HEK293 (cell line): ENCODE measurements at regions of chr1 and their contacts with region 1.

Region 1: DNA sequence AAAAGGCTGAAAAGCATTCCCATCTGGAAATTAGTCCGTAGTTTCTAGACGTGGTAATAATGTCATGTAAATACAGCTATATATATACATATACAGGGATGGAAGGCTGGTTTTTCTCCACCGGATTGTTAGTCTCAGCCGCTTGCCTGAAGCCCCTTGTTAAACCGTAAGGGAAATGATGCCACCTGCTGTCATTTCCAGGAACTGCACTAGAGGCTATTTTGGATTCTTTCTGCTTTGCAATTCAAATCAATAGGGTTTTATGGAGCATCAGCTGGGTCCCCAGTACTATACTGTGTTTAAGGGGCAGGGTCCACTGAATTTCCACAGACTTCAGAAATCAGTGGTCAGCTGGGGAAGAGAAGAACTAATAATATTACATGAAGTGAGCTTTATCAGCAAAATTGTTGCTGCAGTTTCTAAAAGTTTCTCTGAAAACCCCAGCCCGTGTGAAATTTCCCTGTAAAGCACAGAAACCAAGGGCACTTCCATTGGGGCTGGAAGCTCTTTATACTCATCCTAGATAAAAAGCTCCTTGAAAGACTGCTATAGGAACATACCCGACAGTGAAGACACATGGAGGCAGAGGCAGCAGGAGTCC is 33.8 kb upstream of the MPZL1 start:
- H3K4me3 ChIP-seq: no peak overlapping the region
- H3K27ac ChIP-seq: no peak overlapping the region
- H3K4me1 ChIP-seq: no peaks in the 10 kb centered on the region
- CTCF ChIP-seq: peak; percentile 73

Region 2: DNA sequence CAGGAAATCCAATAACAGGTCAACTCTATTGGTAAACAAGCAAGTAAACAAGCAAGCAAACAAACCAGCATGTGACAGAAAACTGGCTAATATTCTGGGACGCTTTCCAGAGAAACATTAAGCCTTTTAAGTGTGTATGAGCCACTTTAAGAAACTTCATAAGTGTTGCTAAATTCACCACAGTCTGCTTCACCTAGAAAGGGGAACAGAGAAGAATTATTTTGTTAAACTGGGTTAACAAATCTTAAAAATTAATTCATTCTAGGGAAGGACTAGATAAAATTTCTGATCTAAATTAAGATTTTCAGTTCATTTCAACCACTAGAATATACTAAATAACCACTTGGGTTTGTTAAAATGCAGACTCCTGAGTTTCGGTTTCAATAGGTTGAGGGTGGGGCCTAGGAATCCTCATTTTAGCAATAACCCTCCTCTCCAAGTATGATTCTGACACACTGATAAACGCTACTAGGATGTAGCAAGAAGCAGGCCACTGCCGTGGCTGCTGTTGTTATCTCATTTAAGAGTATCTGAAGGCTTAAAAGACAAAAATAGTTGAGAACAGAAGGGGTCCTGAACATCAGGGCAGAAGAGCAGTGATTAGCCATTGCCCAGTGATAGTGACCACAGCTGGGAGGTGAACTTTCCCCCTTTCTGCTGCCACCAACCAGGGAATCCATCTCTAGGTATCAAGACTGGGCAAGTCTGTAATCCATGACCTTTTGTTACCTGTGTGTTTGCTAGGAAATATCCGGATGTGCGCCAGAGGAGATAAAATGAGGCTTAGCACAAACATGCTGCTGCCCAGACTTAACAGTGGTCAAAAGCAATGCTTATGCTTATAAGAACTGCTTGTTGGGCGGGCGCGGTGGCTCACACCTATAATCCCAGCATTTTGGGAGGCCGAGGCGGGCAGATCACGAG is 145.6 kb before region 1 on chr1:
- CTCF ChIA-PET with region 1: interaction called, 29 read pairs
- POLR2A ChIA-PET with region 1: no interaction called
- H3K4me3 ChIP-seq: no peak overlapping the region
- H3K27ac ChIP-seq: no peak overlapping the region
- H3K4me1 ChIP-seq: no peaks in the 10 kb centered on the region
- CTCF ChIP-seq: no peak

Region 3: DNA sequence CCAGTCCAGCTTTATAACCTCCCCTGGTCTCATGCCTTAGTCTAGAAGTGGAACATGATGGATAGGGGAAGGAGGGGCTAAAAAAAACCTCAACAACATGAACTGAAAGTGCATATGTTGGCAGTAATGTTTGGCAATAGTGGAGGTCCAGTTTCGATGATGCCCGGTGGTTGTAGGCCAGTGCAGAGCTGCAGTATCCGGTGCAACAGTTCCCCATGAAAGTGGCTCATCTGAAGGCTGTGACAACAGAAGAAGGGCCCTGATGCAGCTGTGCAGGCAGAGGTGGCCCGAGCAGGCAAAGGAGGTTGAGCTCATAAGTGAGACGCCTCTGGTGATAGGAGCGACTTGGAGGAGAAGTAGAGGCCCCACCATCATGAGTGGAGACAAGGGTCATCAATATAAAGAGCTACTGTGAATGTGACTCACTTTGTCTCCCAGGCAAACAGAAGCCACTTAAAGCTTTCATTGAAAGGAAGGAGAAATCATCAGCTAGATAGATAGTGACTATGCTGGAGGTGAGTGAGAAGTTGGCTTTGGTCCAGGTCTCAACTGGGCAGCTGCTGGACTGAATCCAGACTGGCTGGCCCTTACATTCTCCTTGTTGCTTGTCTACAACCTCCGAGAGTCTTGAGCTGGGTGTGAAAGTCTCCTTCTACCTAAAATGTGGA is 124.3 kb before region 1 on chr1:
- CTCF ChIA-PET with region 1: interaction called, 23 read pairs
- POLR2A ChIA-PET with region 1: no interaction called
- H3K4me3 ChIP-seq: no peak overlapping the region
- H3K27ac ChIP-seq: no peak overlapping the region
- H3K4me1 ChIP-seq: peaks cover 8% of the 10 kb centered on the region; the same call in 1 of the 2 replicates
- CTCF ChIP-seq: no peak

Region 4: DNA sequence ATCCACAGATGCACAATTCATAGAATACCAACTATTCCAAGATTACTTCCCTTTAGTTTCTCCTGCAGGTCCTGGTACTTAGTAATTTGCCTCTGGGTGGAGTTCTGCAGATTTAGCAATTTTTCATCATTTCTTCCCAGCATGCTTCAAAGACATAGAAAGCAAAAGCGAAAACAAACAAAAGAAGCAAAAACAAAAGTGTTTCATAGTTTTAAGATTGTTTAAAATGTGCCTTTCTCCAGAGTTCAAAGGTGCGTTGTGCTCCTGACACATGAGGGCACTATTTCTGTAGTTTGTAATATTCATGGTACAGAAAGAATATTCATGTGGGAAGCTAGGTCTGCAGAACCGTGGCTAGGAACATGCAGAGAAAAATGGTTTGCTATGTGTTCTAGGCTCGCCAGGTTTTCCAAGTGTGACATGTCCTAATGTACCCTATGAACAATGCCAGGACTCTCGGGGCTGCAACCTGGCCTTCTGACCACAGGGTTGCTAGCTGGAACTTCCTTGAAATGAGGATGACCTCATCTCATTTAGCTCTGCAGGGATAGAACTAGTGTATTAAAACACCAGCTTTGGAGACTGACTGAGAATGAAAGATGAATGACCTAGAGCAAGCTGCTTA is 88.0 kb before region 1 on chr1:
- CTCF ChIA-PET with region 1: interaction called, 39 read pairs
- POLR2A ChIA-PET with region 1: no interaction called
- H3K4me3 ChIP-seq: no peak overlapping the region
- H3K27ac ChIP-seq: no peak overlapping the region
- H3K4me1 ChIP-seq: no peaks in the 10 kb centered on the region
- CTCF ChIP-seq: peak; percentile 57